MCF 10A (cell line): ENCODE measurements at regions of chr15 and their contacts with region 1.

Region 1: DNA sequence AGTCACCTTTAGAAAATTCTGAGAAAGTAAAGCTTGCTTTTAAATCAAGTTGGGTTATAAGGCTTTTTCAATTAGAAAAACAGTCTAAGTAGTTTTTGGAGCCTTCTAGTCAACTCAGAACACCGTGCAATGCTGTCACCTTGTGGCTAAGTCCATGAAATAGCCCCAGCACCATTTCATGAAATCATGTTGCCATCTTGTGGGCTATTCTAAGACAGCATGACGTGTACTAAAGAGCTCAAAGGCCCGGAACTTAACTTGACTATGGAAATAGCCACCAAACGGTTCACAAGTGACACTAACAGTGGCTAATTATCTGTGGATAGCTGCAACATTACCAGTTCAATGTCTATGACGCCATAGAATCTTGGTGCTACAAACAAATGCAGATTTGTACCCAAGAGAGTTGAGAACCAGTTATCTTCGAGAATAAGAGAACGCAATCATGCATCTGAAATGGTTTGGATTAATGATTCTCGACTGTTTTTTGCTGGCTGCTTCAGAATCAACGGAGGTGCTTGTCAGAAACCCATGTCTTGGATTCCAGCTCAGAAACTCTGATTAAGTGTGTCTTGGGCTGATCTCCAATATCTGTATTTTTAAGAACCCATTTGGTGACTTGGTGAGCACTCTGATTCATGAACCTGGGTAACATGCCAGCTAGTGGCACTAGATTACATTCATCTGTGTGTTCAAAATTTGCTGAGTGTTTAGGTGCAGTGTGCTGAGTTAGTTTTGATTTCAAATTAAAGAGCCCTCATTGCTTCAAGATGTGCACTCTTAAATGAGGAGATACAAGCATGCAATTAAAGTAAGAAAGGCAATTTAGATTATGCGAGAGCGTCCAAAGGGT is 111.2 kb upstream of the MCTP2 start:
- DNase-seq: peak; percentile 90
- H3K4me3 Mint-ChIP-seq: no peak overlapping the region
- H3K27ac Mint-ChIP-seq: peak overlapping the region; percentile 35
- H3K4me1 Mint-ChIP-seq: no peaks in the 10 kb centered on the region
- H3K27me3 Mint-ChIP-seq: no peaks in the 10 kb centered on the region
- CTCF ChIP-seq: peak; percentile 98

Region 2: GRCh38 chr15:93030430-93031105 is 1089.6 kb before region 1 on chr15:
- CTCF ChIA-PET with region 1: interaction called, 117 read pairs
- POLR2A ChIA-PET with region 1: interaction called, 17 read pairs
- intact Hi-C with region 1: loop called (anchors 1 kb)
- DNase-seq: peak; percentile 81
- H3K4me3 Mint-ChIP-seq: peak overlapping the region; percentile 44
- H3K27ac Mint-ChIP-seq: peak overlapping the region; percentile 95
- H3K4me1 Mint-ChIP-seq: peaks cover 38% of the 10 kb centered on the region
- H3K27me3 Mint-ChIP-seq: no peaks in the 10 kb centered on the region
- CTCF ChIP-seq: peak; percentile 86

Region 3: GRCh38 chr15:93179072-93179471 is 941.1 kb before region 1 on chr15:
- CTCF ChIA-PET with region 1: no interaction called
- POLR2A ChIA-PET with region 1: no interaction called
- intact Hi-C with region 1: no loop called
- DNase-seq: peak; percentile 26
- H3K4me3 Mint-ChIP-seq: no peak overlapping the region
- H3K27ac Mint-ChIP-seq: no peak overlapping the region
- H3K4me1 Mint-ChIP-seq: peaks cover 6% of the 10 kb centered on the region
- H3K27me3 Mint-ChIP-seq: no peaks in the 10 kb centered on the region
- CTCF ChIP-seq: no peak

Region 4: DNA sequence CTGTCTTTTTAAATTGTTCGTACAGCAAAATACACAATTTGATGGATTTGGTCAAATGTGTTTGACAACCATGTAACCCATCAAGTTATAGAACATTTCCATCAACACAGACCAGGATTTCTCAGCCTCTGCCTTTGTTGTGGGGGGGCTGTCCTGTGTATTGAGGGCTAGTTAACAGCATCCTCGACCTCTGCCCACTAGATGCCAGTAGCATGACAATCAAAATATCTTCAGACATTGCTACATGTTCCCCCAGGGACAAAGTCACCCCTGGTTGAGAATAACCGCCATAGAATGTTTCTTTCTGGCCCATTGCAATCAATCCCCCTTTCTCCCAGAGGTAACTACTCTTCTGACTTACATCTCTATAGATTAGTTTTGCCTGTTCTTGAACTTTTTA is 721.0 kb before region 1 on chr15:
- CTCF ChIA-PET with region 1: interaction called, 3 read pairs
- POLR2A ChIA-PET with region 1: no interaction called
- intact Hi-C with region 1: loop called (anchors 10 kb)
- DNase-seq: peak; percentile 6
- H3K4me3 Mint-ChIP-seq: no peak overlapping the region
- H3K27ac Mint-ChIP-seq: no peak overlapping the region
- H3K4me1 Mint-ChIP-seq: no peaks in the 10 kb centered on the region
- H3K27me3 Mint-ChIP-seq: no peaks in the 10 kb centered on the region
- CTCF ChIP-seq: no peak

Region 5: DNA sequence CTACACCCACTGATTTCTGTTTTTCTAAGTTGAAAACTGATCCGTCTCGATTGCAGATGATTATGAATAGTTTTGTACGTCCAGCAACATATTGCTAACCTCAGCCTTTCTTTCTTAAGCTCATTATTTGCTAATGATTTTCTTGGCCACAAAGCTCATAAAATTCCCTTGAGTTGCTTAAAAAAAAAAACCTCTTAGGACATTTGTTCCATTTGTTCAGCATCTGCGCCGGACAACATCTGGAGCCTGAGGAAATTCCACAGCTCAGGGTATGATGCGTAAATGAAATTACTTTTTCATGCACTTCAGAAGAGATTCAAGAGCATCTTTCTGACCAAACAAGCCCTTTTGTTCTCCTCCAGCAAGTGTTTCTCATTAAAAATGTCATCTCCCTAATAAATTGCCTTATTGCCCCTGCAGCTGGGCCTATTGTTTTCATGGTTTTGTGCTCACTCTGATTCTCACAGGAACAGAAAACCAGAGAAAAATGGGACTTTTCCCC is 137.9 kb before region 1 on chr15:
- CTCF ChIA-PET with region 1: interaction called, 15 read pairs
- POLR2A ChIA-PET with region 1: interaction called, 3 read pairs
- intact Hi-C with region 1: no loop called
- DNase-seq: no peak
- H3K4me3 Mint-ChIP-seq: no peak overlapping the region
- H3K27ac Mint-ChIP-seq: no peak overlapping the region
- H3K4me1 Mint-ChIP-seq: no peaks in the 10 kb centered on the region
- H3K27me3 Mint-ChIP-seq: no peaks in the 10 kb centered on the region
- CTCF ChIP-seq: no peak

Region 6: DNA sequence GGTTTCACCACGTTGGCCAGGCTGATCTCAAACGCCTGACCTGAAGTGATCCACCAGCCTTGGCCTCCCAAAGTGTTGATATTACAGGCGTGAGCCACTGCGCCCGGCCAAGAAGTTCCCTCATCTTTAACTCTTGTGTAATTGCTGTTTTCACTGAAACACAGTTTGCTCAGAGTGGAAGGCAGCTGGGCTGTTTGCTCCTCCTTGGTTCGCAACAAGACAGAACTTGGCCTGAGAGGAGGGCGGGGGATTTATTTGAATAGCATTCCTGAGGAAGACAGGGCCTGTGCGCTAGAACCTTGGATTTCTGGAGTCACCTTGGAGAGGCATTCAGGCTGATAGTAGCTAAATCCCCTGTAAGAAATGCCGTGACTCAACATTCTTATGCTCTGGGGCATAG is 115.5 kb before region 1 on chr15:
- CTCF ChIA-PET with region 1: interaction called, 102 read pairs
- POLR2A ChIA-PET with region 1: interaction called, 3 read pairs
- intact Hi-C with region 1: no loop called
- DNase-seq: peak; percentile 9
- H3K4me3 Mint-ChIP-seq: no peak overlapping the region
- H3K27ac Mint-ChIP-seq: peak overlapping the region; percentile 27
- H3K4me1 Mint-ChIP-seq: peaks cover 6% of the 10 kb centered on the region
- H3K27me3 Mint-ChIP-seq: no peaks in the 10 kb centered on the region
- CTCF ChIP-seq: no peak

Region 7: DNA sequence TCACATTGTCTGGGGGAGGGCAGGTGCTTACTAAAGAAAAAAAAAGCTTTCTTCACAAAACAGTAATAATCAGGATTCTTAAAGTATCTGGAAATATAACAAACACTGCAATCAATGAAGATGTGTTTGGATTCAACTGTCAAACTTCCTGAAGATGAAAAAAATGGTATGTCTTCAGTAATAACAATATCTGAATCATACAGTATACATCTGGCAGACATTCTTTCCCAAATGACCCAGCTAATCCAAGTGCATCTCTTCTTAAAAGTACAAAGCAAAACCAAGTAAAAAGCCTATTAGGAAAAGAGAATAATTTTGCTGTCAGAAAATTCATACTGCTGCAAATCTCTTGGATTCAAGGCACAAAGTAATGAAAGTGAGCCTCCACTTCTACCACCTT is 33.8 kb before region 1 on chr15:
- CTCF ChIA-PET with region 1: interaction called, 11 read pairs
- POLR2A ChIA-PET with region 1: no interaction called
- intact Hi-C with region 1: no loop called
- DNase-seq: peak; percentile 31
- H3K4me3 Mint-ChIP-seq: no peak overlapping the region
- H3K27ac Mint-ChIP-seq: no peak overlapping the region
- H3K4me1 Mint-ChIP-seq: peaks cover 16% of the 10 kb centered on the region
- H3K27me3 Mint-ChIP-seq: no peaks in the 10 kb centered on the region
- CTCF ChIP-seq: no peak

Region 8: DNA sequence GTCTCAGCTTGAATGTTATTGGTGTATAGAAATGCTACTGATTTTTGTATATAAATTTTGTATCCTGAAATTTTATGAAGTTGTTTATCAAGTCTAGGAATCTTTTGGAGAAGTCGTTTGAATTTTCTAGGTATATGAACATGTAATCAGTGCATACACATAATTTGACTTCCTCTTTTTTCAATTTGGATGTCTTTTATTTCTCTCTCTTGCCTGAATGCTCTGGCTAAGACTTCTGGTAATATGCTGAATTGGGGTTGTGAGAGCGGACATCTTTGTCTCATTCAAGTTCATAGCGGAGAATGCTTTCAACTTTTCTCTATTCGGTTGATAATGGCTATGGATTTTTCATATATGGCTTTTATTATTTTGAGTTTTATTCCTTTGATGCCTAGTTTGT is 10.4 kb after region 1 on chr15:
- CTCF ChIA-PET with region 1: interaction called, 11 read pairs
- POLR2A ChIA-PET with region 1: no interaction called
- intact Hi-C with region 1: no loop called
- DNase-seq: no peak
- H3K4me3 Mint-ChIP-seq: no peak overlapping the region
- H3K27ac Mint-ChIP-seq: no peak overlapping the region
- H3K4me1 Mint-ChIP-seq: no peaks in the 10 kb centered on the region
- H3K27me3 Mint-ChIP-seq: peaks cover 17% of the 10 kb centered on the region
- CTCF ChIP-seq: no peak